Sciatic nerve (tissue), 2 donors: ENCODE measurements at regions of chr15 and their contacts with region 1.

Region 1: GRCh38 chr15:46703020-46703861 is 1014.1 kb upstream of the SEMA6D start:
- DNase-seq: no peak
- ATAC-seq: no peak

Region 2: GRCh38 chr15:46676233-46677206 is 26.7 kb before region 1 on chr15:
- intact Hi-C with region 1: loop called (anchors 1 kb)
- DNase-seq: no peak
- ATAC-seq: no peak